ENCODE measurements at regions of chr6 and their contacts with region 1.

Region 1: DNA sequence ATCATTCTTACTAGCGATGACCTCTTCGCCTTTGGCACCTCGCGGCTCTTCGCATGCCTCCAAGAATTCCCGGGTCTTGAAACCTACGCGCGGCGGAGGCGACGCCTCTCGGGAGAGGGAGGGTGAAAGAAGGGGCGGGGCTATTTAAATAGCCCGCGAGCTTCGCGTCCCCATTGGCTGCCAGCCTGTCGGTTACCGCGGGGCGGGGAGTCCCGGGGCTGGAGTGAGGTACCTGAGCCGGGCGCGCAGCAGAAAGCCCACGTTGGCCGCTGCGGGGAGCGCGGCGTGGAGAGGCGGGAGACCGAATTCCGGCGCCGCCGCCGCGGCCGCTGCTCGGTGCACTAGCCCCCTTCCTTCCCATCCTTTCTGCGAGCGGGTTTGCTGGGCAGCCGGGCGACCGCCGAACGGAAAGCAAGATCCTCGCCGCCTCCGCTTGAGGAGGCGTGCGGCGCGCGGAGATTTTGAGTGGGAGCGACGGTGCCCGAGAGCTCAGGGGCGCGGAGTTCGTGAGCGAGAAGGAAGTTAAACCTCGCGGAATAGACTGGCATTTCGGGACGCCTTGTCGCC is at the start of gene BMP6:
- DNase-seq: peak; percentile 38 to 71 (median 66)
- H3K4me3 ChIP-seq: peak within 1 kb of the TSS; percentile 38 to 78 (median 40)
- H3K4me3 Mint-ChIP-seq: peak within 1 kb of the TSS; percentile 87 to 96
- H3K27ac ChIP-seq: no peak within 1 kb of the TSS
- H3K27ac Mint-ChIP-seq: peak within 1 kb of the TSS in 3 of 7 donors; percentile 35 to 66 (median 37)
- H3K4me1 ChIP-seq: peaks cover 22 to 33% of the 10 kb centered on the region in 2 donors
- H3K4me1 Mint-ChIP-seq: peaks cover 30% of the 10 kb centered on the region
- H3K27me3 ChIP-seq: peaks cover 61 to 74% of the 10 kb centered on the region in 2 donors
- H3K27me3 Mint-ChIP-seq: peaks cover 65 to 77% (median 69%) of the 10 kb centered on the region in 3 donors
- CTCF ChIP-seq: no peak
- polyA plus RNA-seq, gene BMP6: not detected

Region 2: DNA sequence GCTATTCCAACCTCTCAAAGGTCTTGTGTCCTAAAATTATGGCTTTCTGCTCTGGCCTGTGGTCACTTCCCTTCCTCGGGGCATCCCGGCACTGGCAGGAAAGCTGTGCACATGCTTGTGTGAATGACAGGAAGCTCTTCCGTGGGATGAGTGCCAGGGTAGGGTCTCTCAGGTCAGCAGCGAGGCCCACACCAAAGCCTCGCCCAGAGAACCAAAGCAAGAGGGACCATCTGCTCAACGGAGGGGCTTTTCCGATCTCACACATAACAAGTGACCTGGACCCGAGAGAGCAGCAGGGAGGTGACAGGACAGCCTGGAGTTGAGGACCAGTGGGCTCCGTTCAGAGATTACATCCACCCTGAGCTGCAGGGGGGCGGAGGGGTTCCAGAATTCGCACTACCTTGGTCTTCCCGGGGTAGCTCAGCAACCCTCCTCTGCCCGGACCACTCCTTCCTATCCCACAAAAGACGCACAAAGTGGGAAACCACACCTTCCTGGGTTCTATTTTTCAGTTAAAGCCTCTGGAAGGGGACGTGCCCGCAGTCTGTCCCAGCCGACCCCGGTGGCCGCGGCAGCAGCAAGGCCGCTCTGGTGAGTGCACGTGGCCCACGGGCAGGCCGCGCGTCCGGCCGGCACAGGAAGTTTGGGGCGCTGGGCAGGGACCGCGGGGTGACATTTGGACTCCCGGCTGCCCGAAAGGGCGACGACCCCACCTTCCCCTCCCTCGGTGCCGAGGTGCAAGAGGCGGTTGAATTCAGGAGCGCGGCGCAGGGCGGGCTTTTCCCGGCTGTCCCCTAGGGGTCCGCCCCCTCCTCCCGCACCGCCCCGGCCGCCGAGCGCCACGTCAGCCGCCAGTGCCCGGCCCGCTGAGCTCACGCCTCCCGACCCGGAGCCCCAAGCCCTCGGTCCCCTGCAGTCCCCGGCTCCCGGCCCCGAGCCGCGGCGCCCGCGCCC is 183.7 kb after region 1 on chr6:
- intact Hi-C with region 1: loop called in 1 of 2 experiments (anchors 5 kb)
- DNase-seq: peak; percentile 14 to 25 (median 19)
- H3K4me3 ChIP-seq: peak overlapping the region; percentile 32 to 80 (median 55)
- H3K4me3 Mint-ChIP-seq: peak overlapping the region; percentile 83 to 93
- H3K27ac ChIP-seq: peak overlapping the region in 1 of 2 donors; percentile 14
- H3K27ac Mint-ChIP-seq: peak overlapping the region in 3 of 7 donors; percentile 21 to 55 (median 43)
- H3K4me1 ChIP-seq: peaks cover 12 to 16% of the 10 kb centered on the region in 2 donors
- H3K4me1 Mint-ChIP-seq: peaks cover 12% of the 10 kb centered on the region
- H3K27me3 ChIP-seq: peaks cover 0 to 9% of the 10 kb centered on the region in 2 donors
- H3K27me3 Mint-ChIP-seq: peaks cover 0 to 4% (median 0%) of the 10 kb centered on the region in 3 donors
- CTCF ChIP-seq: no peak

Measured in CD14-positive monocyte (primary cell).